Activated CD4-positive, alpha-beta T cell treated with anti-CD3 and anti-CD28 coated beads for 36 hours (primary cell): ENCODE measurements at regions of chr2 and their contacts with region 1.

Region 1: GRCh38 chr2:233084488-233084887 is 24.3 kb downstream of the INPP5D start:
- DNase-seq: peak; percentile 72
- ATAC-seq: peak; percentile 5
- H3K4me3 Mint-ChIP-seq: peak overlapping the region; percentile 50
- H3K27ac Mint-ChIP-seq: peak overlapping the region; percentile 87
- H3K4me1 Mint-ChIP-seq: peaks cover 79% of the 10 kb centered on the region
- H3K27me3 Mint-ChIP-seq: no peaks in the 10 kb centered on the region

Region 2: GRCh38 chr2:232550354-232551249 is 533.9 kb before region 1 on chr2 and contains the starts of genes EIF4E2 and TIGD1:
- CTCF ChIA-PET with region 1: no interaction called
- POLR2A ChIA-PET with region 1: interaction called, 3 read pairs
- intact Hi-C with region 1: loop called in 1 of 2 experiments (anchors 5 kb)
- DNase-seq: peak; percentile 96
- ATAC-seq: peak; percentile 95
- H3K4me3 Mint-ChIP-seq: peak within 1 kb of the TSS; percentile 98
- H3K27ac Mint-ChIP-seq: peak within 1 kb of the TSS; percentile 100
- H3K4me1 Mint-ChIP-seq: peaks cover 66% of the 10 kb centered on the region
- H3K27me3 Mint-ChIP-seq: no peaks in the 10 kb centered on the region
- total RNA-seq, gene EIF4E2: 57.0 to 68.0 TPM
- total RNA-seq, gene TIGD1: 7.6 to 7.9 TPM

Region 3: GRCh38 chr2:232898592-232899543 is 185.6 kb before region 1 on chr2:
- CTCF ChIA-PET with region 1: no interaction called
- POLR2A ChIA-PET with region 1: interaction called, 4 read pairs
- intact Hi-C with region 1: loop called in 1 of 2 experiments (anchors 2 kb)
- DNase-seq: no peak
- ATAC-seq: peak; percentile 8
- H3K4me3 Mint-ChIP-seq: no peak overlapping the region
- H3K27ac Mint-ChIP-seq: no peak overlapping the region
- H3K4me1 Mint-ChIP-seq: peaks cover 15% of the 10 kb centered on the region
- H3K27me3 Mint-ChIP-seq: no peaks in the 10 kb centered on the region

Region 4: DNA sequence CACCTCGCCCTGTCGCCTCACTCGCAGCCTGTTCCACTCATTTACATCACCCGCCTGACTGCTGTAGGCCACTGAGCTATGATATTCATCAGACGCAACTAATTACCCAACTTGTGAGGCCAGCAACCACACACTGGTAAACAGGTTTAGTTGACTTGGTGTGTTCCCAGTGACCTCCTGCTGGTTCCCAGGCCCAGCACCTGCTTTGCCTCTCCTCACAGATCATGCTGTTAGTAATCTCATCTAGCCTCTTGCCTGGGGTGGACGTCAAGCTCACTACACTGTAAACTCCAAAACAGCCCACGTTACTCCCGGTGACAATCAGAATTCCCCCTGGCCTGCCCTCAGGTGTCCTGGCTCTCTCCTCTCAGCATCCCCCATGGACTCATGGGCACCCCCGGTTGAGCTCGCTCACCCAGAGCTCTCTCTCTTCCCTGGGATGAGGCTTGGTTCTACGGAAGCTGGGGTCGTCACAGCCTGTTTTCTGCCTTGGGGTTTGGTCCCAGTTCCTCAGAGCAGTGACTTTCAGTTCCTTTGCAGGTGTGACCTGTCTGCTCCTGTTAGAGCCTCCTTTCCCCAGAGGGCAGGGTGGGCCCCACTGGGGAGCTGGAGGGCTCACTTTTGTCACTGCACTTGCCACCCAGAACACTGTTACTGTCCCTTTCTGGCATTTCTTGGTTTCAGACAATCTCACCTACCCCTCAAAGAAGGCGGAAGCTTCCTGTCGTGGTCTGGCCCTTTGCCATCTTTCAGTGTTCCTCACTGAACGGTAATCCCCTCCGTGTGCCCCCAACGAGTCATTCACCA is 15.9 kb after region 1 on chr2:
- CTCF ChIA-PET with region 1: interaction called, 6 read pairs
- POLR2A ChIA-PET with region 1: interaction called, 4 read pairs
- intact Hi-C with region 1: loop called (anchors 1 kb)
- DNase-seq: peak; percentile 81
- ATAC-seq: peak; percentile 73
- H3K4me3 Mint-ChIP-seq: peak overlapping the region; percentile 24
- H3K27ac Mint-ChIP-seq: peak overlapping the region; percentile 84
- H3K4me1 Mint-ChIP-seq: peaks cover 61% of the 10 kb centered on the region
- H3K27me3 Mint-ChIP-seq: no peaks in the 10 kb centered on the region

Region 5: GRCh38 chr2:233111427-233111826 is 26.9 kb after region 1 on chr2:
- CTCF ChIA-PET with region 1: no interaction called
- POLR2A ChIA-PET with region 1: no interaction called
- intact Hi-C with region 1: no loop called
- DNase-seq: no peak
- ATAC-seq: no peak
- H3K4me3 Mint-ChIP-seq: no peak overlapping the region
- H3K27ac Mint-ChIP-seq: no peak overlapping the region
- H3K4me1 Mint-ChIP-seq: peaks cover 66% of the 10 kb centered on the region
- H3K27me3 Mint-ChIP-seq: no peaks in the 10 kb centered on the region

Region 6: DNA sequence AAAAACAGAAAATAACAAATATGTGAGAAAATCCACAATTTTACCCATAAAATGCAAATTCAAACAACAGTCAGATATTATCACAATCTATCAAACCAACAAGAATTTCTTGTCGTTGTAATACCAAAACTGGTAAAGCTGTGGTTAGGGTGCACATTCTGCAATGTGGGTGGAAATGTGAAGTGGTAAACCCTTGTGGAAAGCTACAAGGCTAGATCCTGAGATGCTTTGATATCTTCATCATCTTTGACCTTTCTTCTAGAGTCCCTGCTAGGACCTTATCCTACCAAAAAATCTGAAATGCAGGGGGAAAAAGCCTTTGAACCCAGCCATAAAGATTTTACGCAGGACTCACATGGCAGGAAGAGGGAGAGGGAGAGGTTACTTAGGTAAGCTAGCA is 149.8 kb after region 1 on chr2:
- CTCF ChIA-PET with region 1: interaction called, 3 read pairs
- POLR2A ChIA-PET with region 1: no interaction called
- intact Hi-C with region 1: loop called (anchors 2 to 5 kb)
- DNase-seq: peak; percentile 45
- ATAC-seq: peak; percentile 27
- H3K4me3 Mint-ChIP-seq: peak overlapping the region; percentile 16
- H3K27ac Mint-ChIP-seq: peak overlapping the region; percentile 72
- H3K4me1 Mint-ChIP-seq: peaks cover 37% of the 10 kb centered on the region
- H3K27me3 Mint-ChIP-seq: no peaks in the 10 kb centered on the region

Region 7: DNA sequence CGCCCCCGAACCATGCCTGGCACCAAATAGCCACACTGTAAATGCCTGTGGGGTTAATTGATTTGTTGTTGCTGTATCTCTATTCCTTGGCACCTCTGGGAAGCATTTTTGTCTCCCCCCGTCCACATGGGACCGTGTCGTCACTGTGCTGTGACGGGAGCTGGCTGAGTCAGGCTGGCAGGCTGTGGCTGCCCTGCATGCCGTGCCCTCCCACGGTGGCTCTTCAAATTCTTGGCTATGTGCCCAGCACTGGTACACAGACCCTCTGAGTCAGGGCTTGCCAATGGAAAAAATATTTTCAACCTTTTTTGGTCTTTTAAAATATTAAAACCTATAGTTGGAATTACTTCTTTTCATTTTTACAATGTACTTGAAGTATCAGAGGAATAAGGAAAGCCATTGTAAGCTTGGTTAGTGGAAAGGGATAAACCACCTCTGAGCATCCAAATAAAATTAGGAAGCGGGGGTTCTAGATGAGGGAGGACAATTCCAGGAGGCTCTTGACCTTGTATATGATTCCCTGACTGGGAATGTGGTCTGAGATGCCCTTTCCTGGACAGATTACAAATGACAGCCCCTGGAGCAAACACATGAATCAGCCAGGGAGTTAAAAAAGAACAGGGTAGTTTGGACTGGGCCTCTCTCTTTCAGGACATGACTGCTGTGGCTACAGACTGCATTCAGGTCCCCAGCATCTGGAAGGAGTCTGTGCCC is 329.2 kb after region 1 on chr2:
- CTCF ChIA-PET with region 1: no interaction called
- POLR2A ChIA-PET with region 1: no interaction called
- intact Hi-C with region 1: loop called in 1 of 2 experiments (anchors 2 kb)
- DNase-seq: peak; percentile 81
- ATAC-seq: peak; percentile 48
- H3K4me3 Mint-ChIP-seq: no peak overlapping the region
- H3K27ac Mint-ChIP-seq: peak overlapping the region; percentile 95
- H3K4me1 Mint-ChIP-seq: peaks cover 89% of the 10 kb centered on the region
- H3K27me3 Mint-ChIP-seq: no peaks in the 10 kb centered on the region